MCF 10A (cell line): ENCODE measurements at regions of chr11 and their contacts with region 1.

Region 1: GRCh38 chr11:76152086-76152681 is 54.1 kb downstream of the WNT11 start:
- DNase-seq: peak; percentile 81
- H3K4me3 Mint-ChIP-seq: no peak overlapping the region
- H3K27ac Mint-ChIP-seq: no peak overlapping the region
- H3K4me1 Mint-ChIP-seq: peaks cover 9% of the 10 kb centered on the region
- H3K27me3 Mint-ChIP-seq: peaks cover 11% of the 10 kb centered on the region
- CTCF ChIP-seq: peak; percentile 97

Region 2: GRCh38 chr11:75896843-75897419 is 255.3 kb before region 1 on chr11:
- CTCF ChIA-PET with region 1: interaction called, 88 read pairs
- POLR2A ChIA-PET with region 1: interaction called, 9 read pairs
- intact Hi-C with region 1: loop called (anchors 1 kb)
- DNase-seq: peak; percentile 54
- H3K4me3 Mint-ChIP-seq: no peak overlapping the region
- H3K27ac Mint-ChIP-seq: no peak overlapping the region
- H3K4me1 Mint-ChIP-seq: no peaks in the 10 kb centered on the region
- H3K27me3 Mint-ChIP-seq: no peaks in the 10 kb centered on the region
- CTCF ChIP-seq: peak; percentile 54

Region 3: GRCh38 chr11:75903276-75903675 is 248.9 kb before region 1 on chr11:
- CTCF ChIA-PET with region 1: interaction called, 88 read pairs
- POLR2A ChIA-PET with region 1: no interaction called
- intact Hi-C with region 1: no loop called
- DNase-seq: no peak
- H3K4me3 Mint-ChIP-seq: no peak overlapping the region
- H3K27ac Mint-ChIP-seq: no peak overlapping the region
- H3K4me1 Mint-ChIP-seq: no peaks in the 10 kb centered on the region
- H3K27me3 Mint-ChIP-seq: no peaks in the 10 kb centered on the region
- CTCF ChIP-seq: no peak

Region 4: DNA sequence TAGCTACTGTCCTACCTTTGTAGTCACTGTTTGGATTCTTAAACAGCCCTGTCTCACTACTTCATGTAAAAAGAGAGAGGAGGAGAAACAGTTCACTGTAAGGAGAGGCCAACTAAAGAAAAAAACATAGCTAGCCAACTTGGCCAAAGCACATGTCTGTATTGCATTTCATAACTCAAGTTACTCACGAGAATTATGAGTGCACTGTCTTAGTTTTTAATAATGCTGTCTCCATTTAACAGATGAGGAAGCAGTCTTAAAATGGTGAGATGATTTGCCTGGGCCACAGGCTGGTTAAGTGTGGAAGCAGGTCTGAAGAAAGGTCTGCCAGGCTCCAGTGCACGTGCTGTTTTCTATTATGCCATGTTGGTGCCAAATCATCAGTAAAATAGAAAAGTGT is 232.7 kb before region 1 on chr11:
- CTCF ChIA-PET with region 1: interaction called, 4 read pairs
- POLR2A ChIA-PET with region 1: no interaction called
- intact Hi-C with region 1: loop called (anchors 5 kb)
- DNase-seq: no peak
- H3K4me3 Mint-ChIP-seq: no peak overlapping the region
- H3K27ac Mint-ChIP-seq: no peak overlapping the region
- H3K4me1 Mint-ChIP-seq: peaks cover 7% of the 10 kb centered on the region
- H3K27me3 Mint-ChIP-seq: no peaks in the 10 kb centered on the region
- CTCF ChIP-seq: no peak

Region 5: DNA sequence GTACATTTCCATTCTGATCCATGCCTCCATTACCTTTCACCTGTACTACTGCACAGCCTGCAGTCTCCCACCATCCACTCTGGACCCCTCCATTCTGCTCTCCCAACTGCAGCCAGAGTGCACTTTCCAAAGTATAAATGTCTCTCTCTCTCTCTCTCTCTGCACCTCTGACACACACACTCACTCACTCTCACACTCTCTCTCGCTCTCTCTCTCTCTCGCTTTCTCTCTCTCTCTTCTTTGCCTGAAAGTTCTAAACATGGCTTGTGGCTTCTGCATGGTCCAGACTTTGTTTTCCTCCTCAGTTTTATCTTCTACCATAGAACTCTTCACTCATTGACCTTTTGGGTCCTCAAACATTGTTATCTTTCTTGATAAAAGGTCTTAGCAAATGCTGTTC is 22.5 kb before region 1 on chr11:
- CTCF ChIA-PET with region 1: interaction called, 11 read pairs
- POLR2A ChIA-PET with region 1: no interaction called
- intact Hi-C with region 1: no loop called
- DNase-seq: no peak
- H3K4me3 Mint-ChIP-seq: no peak overlapping the region
- H3K27ac Mint-ChIP-seq: no peak overlapping the region
- H3K4me1 Mint-ChIP-seq: no peaks in the 10 kb centered on the region
- H3K27me3 Mint-ChIP-seq: no peaks in the 10 kb centered on the region
- CTCF ChIP-seq: no peak

Region 6: DNA sequence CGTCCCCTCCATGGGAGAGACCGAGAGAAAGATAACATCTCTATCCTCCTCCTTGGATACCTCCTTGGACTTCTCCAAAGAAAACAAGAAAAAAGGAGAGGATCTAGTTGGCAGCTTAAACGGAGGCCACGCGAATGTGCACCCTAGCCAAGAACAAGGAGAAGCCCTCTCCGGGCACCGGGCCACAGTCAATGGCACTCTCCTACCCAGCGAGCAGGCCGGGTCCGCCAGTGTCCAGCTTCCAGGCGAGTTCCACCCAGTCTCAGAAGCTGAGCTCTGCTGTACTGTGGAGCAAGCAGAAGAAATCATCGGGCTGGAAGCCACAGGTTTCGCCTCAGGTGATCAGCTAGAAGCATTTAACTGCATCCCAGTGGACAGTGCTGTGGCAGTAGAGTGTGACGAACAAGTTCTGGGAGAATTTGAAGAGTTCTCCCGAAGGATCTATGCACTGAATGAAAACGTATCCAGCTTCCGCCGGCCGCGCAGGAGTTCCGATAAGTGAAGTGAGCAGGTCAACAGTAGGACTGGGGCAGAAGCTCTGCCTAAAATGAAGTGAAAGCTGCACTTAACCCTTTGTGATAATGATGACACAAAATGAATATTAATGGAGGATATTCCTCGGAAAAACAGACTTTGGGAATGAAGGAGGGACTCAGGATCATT is 11.1 kb before region 1 on chr11:
- CTCF ChIA-PET with region 1: interaction called, 13 read pairs
- POLR2A ChIA-PET with region 1: no interaction called
- intact Hi-C with region 1: no loop called
- DNase-seq: no peak
- H3K4me3 Mint-ChIP-seq: no peak overlapping the region
- H3K27ac Mint-ChIP-seq: no peak overlapping the region
- H3K4me1 Mint-ChIP-seq: peaks cover 6% of the 10 kb centered on the region
- H3K27me3 Mint-ChIP-seq: no peaks in the 10 kb centered on the region
- CTCF ChIP-seq: no peak

Region 7: GRCh38 chr11:76347466-76347865 is 195.3 kb after region 1 on chr11:
- CTCF ChIA-PET with region 1: no interaction called
- POLR2A ChIA-PET with region 1: no interaction called
- intact Hi-C with region 1: no loop called
- DNase-seq: no peak
- H3K4me3 Mint-ChIP-seq: no peak overlapping the region
- H3K27ac Mint-ChIP-seq: no peak overlapping the region
- H3K4me1 Mint-ChIP-seq: no peaks in the 10 kb centered on the region
- H3K27me3 Mint-ChIP-seq: no peaks in the 10 kb centered on the region
- CTCF ChIP-seq: no peak